AG04450 (cell line): ENCODE measurements at regions of chr6 and their contacts with region 1.

Region 1: GRCh38 chr6:69719602-69720193 is 77.1 kb downstream of the LMBRD1 start:
- DNase-seq: no peak
- H3K4me3 ChIP-seq: no peak overlapping the region
- H3K27ac ChIP-seq: no peak overlapping the region
- H3K27me3 ChIP-seq: no peaks in the 10 kb centered on the region
- CTCF ChIP-seq: peak; percentile 55

Region 2: GRCh38 chr6:69631552-69632346 is 87.9 kb before region 1 on chr6:
- CTCF ChIA-PET with region 1: no interaction called
- POLR2A ChIA-PET with region 1: no interaction called
- DNase-seq: no peak
- H3K4me3 ChIP-seq: no peak overlapping the region
- H3K27ac ChIP-seq: no peak overlapping the region
- H3K27me3 ChIP-seq: no peaks in the 10 kb centered on the region
- CTCF ChIP-seq: no peak

Region 3: GRCh38 chr6:69650703-69651102 is 69.0 kb before region 1 on chr6:
- CTCF ChIA-PET with region 1: no interaction called
- POLR2A ChIA-PET with region 1: no interaction called
- DNase-seq: no peak
- H3K4me3 ChIP-seq: no peak overlapping the region
- H3K27ac ChIP-seq: no peak overlapping the region
- H3K27me3 ChIP-seq: no peaks in the 10 kb centered on the region
- CTCF ChIP-seq: no peak

Region 4: GRCh38 chr6:69732640-69733039 is 12.9 kb after region 1 on chr6:
- CTCF ChIA-PET with region 1: interaction called, 11 read pairs
- POLR2A ChIA-PET with region 1: no interaction called
- DNase-seq: no peak
- H3K4me3 ChIP-seq: no peak overlapping the region
- H3K27ac ChIP-seq: no peak overlapping the region
- H3K27me3 ChIP-seq: no peaks in the 10 kb centered on the region
- CTCF ChIP-seq: peak; percentile 22